ENCODE measurements at regions of chr17 and their contacts with region 1.

Region 1: DNA sequence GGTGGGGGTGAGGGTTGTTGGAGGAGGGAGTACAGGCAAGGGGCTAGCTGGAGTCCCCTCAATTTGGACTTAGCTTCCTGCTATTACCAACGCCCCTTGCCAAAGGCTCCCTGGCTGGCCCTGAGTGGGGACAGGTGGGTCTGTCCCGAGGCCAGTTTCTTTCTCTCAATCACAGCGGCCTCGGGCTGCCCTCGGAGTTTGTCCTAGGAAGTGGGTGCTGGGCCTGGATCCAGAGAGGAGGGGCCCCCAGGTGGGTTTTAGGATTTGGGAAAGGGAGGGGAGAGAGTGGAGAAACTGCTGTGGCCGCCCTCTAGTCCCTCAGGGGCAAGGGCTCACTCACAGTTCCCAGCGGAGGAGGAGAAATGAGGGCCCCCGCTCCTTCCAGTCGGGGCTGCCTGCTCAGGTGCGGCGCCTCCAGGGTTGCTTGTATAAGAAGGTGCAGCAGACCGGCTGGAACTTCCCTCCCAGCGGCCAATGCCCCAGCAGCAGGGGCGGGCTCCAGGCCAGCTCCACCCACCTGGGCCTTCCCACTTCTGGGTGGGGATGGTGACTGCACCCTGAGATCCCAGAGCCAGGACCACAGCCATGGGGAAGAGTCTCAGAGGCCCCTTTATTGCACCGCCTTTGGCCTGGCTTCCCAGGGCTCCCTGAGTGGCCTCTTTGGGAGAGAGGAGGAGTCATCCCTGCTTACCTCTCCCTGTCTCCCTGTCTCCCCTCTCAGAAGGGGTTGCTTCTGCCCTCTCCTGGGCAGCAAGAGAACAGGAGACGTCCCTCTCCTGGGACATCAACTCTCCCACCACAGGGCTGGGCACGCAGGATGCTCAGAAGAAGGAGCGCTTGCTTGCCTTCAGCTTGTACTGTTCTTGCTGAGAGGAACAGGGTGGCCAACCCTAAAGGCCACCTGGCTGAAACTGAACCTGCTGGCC is 112.0 kb upstream of the SMURF2 start:
- DNase-seq: no peak
- ATAC-seq: peak; percentile 76
- H3K4me3 ChIP-seq: no peak overlapping the region
- H3K27ac ChIP-seq: no peak overlapping the region
- H3K4me1 ChIP-seq: peaks cover 16% of the 10 kb centered on the region
- H3K27me3 ChIP-seq: peaks cover 2 to 4% of the 10 kb centered on the region in 2 experiments; a peak in 2 of 4 replicates
- CTCF ChIP-seq: peak in 2 of 3 experiments; percentile 10 to 33; a peak in 1 of 6 replicates
- EP300 ChIP-seq: no peak
- POLR2A ChIP-seq: no peak
- RAD21 ChIP-seq: no peak

Region 2: DNA sequence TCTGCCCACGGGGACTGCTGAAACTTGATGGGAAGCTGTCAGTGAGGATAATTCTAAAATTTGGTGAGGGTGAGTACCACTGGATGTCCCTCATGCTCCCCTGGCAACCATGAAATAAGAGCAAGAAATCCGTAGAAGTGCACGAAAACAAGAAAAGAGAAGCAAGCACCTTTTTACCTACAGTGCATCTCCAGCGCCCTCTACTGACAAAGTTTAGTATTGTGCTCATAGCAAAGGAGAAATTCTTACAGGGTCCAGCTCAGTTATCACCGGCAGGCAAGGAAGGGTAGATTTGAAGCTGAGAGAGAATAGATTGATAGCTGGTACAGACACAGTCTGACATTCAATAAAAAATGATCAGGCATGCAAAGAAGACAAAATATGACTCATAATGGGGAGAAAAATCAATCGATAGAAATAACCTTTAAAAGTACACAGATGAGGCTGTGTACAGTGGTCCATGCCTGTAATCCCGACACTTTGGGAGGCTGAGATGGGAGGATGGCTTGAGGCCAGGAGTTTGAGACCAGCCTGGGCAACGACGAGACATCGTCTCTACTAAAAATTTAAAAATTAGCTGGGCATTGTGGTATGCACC is 482.7 kb before region 1 on chr17:
- CTCF ChIA-PET with region 1: no interaction called
- POLR2A ChIA-PET with region 1: no interaction called
- RAD21 ChIA-PET with region 1: no interaction called
- SMC1A ChIA-PET with region 1: no interaction called
- in situ Hi-C with region 1: no loop called
- intact Hi-C with region 1: no loop called
- DNase-seq: no peak
- ATAC-seq: peak; percentile 53
- H3K4me3 ChIP-seq: no peak overlapping the region
- H3K27ac ChIP-seq: no peak overlapping the region
- H3K4me1 ChIP-seq: no peaks in the 10 kb centered on the region
- H3K27me3 ChIP-seq: no peaks in the 10 kb centered on the region; a peak in 1 of 4 replicates
- CTCF ChIP-seq: peak; percentile 36 to 65 (median 47); a peak in 5 of 6 replicates
- EP300 ChIP-seq: no peak
- POLR2A ChIP-seq: no peak
- RAD21 ChIP-seq: peak; percentile 40

Region 3: GRCh38 chr17:64309710-64310109 is 464.4 kb before region 1 on chr17:
- CTCF ChIA-PET with region 1: no interaction called
- POLR2A ChIA-PET with region 1: no interaction called
- RAD21 ChIA-PET with region 1: no interaction called
- SMC1A ChIA-PET with region 1: no interaction called
- in situ Hi-C with region 1: no loop called
- intact Hi-C with region 1: no loop called
- DNase-seq: no peak
- ATAC-seq: no peak
- H3K4me3 ChIP-seq: no peak overlapping the region
- H3K27ac ChIP-seq: no peak overlapping the region
- H3K4me1 ChIP-seq: no peaks in the 10 kb centered on the region
- H3K27me3 ChIP-seq: no peaks in the 10 kb centered on the region
- CTCF ChIP-seq: no peak
- EP300 ChIP-seq: no peak
- POLR2A ChIP-seq: no peak
- RAD21 ChIP-seq: no peak

Region 4: GRCh38 chr17:64938925-64939474 is 164.9 kb after region 1 on chr17:
- CTCF ChIA-PET with region 1: interaction called, 15 read pairs
- POLR2A ChIA-PET with region 1: no interaction called
- RAD21 ChIA-PET with region 1: interaction called, 4 read pairs
- SMC1A ChIA-PET with region 1: interaction called, 3 read pairs
- in situ Hi-C with region 1: loop called (anchors 10 kb)
- intact Hi-C with region 1: no loop called
- DNase-seq: no peak
- ATAC-seq: peak; percentile 98
- H3K4me3 ChIP-seq: no peak overlapping the region
- H3K27ac ChIP-seq: no peak overlapping the region
- H3K4me1 ChIP-seq: peaks cover 9% of the 10 kb centered on the region
- H3K27me3 ChIP-seq: no peaks in the 10 kb centered on the region
- CTCF ChIP-seq: peak; percentile 69 to 81 (median 71)
- EP300 ChIP-seq: no peak
- POLR2A ChIP-seq: no peak
- RAD21 ChIP-seq: peak; percentile 55

Measured in GM12878 (cell line).